ENCODE measurements at regions of chr1 and their contacts with region 1.

Region 1: DNA sequence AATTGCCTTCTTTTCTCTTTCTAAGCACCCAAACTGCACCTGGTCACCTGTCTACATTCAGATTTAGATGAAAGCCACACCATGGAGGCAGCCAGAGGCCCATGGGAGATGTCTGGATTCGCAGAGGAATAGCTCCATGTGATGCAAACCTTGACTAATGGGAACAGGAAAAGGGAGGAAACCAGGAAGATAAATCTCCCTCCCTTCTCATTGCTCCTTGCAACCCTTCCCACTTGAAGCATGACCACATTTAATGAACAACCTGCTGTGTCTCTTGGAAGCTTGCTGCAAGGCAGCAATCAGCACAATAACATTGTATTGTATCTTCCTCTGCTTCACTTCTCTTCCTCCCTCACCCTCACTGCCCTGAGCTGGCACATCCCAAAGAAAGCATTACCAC is 42.6 kb upstream of the KLF17 start:
- DNase-seq: no peak
- ATAC-seq: no peak
- H3K4me3 ChIP-seq: no peak overlapping the region
- H3K27ac ChIP-seq: no peak overlapping the region
- H3K4me1 ChIP-seq: peaks cover 0 to 3% (median 0%) of the 10 kb centered on the region in 12 donors
- H3K27me3 ChIP-seq: no peaks in the 10 kb centered on the region
- CTCF ChIP-seq: no peak
- POLR2A ChIP-seq: no peak

Region 2: DNA sequence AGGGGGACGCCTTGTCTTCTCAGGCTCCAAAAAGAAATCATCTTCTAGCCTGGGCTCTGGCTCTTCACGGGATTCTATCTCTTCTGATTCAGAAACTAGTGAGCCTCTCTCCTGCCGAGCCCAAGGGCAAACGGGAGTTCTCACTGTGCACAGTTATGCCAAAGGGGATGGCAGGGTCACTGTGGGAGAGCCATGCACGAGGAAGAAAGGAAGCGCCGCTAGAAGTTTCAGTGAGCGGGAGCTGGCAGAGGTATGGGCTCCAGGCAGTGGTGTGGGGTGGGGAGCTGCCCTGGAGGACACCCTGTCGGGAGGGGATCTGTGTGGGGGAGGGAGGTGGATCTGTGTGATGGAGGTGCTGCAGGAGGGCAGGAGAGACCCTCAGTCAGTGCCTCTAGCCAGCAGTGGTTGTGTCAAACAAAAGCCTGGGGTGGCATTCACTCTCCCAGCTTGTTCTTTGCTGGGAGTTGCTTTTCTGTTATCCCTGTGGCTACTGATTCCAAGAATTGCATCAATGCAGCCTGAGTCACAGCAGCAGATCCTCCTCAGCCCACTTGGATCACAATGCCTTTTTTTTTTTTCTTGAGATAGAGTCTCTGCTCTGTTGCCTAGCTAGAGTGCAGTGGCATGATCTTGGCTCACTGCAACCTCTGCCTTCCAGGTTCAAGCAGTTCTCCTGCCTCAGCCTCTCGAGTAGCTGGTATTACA is 404.3 kb before region 1 on chr1:
- intact Hi-C with region 1: no loop called
- DNase-seq: no peak
- ATAC-seq: peak; percentile 19 to 56 (median 37)
- H3K4me3 ChIP-seq: no peak overlapping the region
- H3K27ac ChIP-seq: no peak overlapping the region
- H3K4me1 ChIP-seq: peaks cover 0 to 5% (median 0%) of the 10 kb centered on the region in 12 donors
- H3K27me3 ChIP-seq: no peaks in the 10 kb centered on the region
- CTCF ChIP-seq: no peak
- POLR2A ChIP-seq: no peak

Region 3: DNA sequence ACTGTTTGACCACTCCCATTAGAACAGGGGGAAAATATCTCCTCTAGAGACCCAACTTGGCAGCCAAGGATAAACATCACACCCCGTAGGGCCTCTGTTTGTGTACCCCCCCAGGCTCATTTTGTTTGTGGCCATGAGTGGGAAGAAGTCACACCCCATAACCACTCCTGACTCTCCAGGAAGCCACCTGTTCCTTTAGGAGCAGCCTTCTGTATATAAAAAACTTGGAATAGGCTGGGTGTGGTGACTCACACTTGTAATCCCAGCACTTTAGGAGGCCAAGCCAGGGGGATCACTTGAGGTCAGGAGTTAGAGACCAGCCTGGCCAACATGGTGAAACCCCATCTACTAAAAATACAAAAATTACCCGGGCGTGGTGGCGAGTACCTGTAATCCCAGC is 16.1 kb before region 1 on chr1:
- intact Hi-C with region 1: no loop called
- DNase-seq: no peak
- ATAC-seq: peak in 1 of 4 donors; percentile 21
- H3K4me3 ChIP-seq: no peak overlapping the region
- H3K27ac ChIP-seq: no peak overlapping the region
- H3K4me1 ChIP-seq: peaks cover 0 to 7% (median 0%) of the 10 kb centered on the region in 12 donors
- H3K27me3 ChIP-seq: no peaks in the 10 kb centered on the region
- CTCF ChIP-seq: no peak
- POLR2A ChIP-seq: no peak

Region 4: DNA sequence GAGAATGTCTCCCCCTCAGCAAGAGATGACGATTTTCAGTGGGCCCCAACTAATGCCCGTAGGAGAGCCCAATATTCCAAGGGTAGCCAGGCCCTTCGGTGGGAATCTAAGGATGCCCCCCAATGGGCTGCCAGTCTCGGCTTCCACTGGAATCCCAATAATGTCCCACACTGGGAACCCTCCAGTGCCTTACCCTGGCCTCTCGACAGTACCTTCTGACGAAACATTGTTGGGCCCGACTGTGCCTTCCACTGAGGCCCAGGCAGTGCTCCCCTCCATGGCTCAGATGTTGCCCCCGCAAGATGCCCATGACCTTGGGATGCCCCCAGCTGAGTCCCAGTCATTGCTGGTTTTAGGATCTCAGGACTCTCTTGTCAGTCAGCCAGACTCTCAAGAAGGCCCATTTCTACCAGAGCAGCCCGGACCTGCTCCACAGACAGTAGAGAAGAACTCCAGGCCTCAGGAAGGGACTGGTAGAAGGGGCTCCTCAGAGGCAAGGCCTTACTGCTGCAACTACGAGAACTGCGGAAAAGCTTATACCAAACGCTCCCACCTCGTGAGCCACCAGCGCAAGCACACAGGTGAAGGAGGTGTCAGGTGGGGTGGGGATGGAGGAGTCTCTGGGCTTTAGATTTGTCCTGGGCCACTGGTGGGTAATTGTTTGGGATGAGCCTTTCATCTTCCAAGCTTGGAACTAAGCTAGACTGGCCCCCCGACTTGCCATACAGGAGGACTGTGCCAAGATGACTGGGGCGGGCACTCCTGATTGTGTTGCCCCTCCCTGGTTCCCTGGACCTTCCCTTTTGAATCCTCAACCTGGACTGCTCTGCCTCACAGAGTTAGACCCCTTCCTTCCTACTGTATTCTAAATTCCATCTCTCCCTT is 53.8 kb after region 1 on chr1:
- intact Hi-C with region 1: loop called in 1 of 10 experiments (anchors 5 kb)
- DNase-seq: no peak
- ATAC-seq: no peak
- H3K4me3 ChIP-seq: no peak overlapping the region
- H3K27ac ChIP-seq: no peak overlapping the region
- H3K4me1 ChIP-seq: no peaks in the 10 kb centered on the region
- H3K27me3 ChIP-seq: peaks cover 0 to 11% (median 0%) of the 10 kb centered on the region in 9 donors
- CTCF ChIP-seq: no peak
- POLR2A ChIP-seq: no peak